ENCODE measurements at regions of chr7 and their contacts with region 1.

Region 1: DNA sequence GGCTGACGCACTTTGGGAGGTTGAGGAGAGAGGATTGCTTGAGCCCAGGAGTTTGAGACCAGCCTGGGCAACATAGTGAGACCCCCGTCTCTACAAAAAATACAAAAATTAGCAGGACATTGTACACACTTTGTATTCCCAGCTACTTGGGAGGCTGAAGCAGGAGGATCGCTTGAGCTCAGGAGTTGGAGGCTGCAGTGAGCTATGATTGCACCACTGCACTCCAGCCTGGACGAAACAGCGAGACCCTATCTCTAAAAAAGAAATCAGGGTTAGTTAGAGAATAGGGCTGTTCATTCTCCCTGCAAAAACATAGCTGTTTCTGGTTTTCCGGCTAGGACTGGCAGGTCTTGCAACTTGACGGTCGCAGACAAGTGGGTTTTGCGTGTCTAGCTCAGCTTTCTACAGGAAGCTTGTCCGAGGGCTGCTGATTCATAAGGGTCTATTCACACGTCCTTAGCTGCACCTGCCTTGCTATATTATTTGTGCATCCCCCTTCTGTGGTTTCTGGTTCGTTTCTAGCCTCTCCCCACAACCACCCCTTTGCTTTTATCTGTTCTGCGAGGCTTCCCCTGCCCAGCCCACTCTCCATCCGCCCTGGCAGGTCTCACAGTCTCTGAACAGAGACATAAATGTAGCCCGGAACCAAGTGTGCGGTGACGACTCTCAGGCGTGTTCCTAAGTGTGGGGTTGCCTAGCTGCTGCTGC is 10.7 kb downstream of the AMZ1 start:
- DNase-seq: no peak
- H3K4me3 ChIP-seq: no peak overlapping the region
- H3K27ac ChIP-seq: no peak overlapping the region
- H3K4me1 ChIP-seq: no peaks in the 10 kb centered on the region; a peak in 2 of 7 replicates
- H3K27me3 ChIP-seq: no peaks in the 10 kb centered on the region
- CTCF ChIP-seq: no peak
- EP300 ChIP-seq: no peak
- POLR2A ChIP-seq: no peak
- RAD21 ChIP-seq: no peak

Region 2: DNA sequence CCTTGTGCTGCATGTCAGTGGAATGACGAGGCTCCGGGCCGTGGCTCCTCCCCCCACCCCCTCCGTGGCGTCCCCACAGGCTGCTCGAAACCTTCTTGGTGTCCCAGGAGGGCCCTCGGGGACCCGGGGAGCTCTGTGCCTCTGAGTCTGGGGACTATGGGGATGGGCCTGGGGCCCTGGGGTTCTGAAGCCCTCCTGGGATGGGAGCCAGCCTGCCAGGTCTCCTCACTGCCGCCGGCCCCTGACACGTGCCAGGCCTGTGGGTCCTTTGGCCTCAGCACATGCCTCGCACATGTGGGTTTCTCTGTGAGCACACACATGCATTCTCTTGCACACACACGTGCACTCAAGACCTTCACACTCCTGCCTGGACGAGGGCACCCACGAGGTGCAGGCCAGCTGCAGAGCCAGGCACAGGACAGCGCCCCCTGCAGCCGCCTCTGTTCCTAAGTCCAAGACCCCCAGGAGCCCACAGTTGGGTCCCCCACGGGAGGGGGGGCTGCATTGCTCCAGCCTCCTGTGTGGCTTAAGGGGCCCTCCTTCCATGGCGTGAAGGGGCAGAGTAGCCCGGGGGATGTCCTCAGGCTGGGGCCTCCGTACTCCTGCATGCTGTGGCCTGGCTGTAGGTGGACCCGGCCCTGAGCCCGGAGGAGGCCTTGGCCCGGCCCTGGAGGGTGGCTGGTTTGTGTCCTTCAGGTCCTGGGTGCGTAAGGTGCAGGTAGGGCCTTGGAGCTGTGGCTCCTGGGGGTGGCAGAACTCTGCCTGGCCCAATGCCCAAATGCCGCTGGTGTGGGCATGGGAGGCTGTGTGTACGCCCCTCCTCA is 37.9 kb before region 1 on chr7:
- CTCF ChIA-PET with region 1: interaction called, 10 read pairs
- POLR2A ChIA-PET with region 1: interaction called, 4 read pairs
- DNase-seq: peak in 1 of 2 experiments; percentile 71
- H3K4me3 ChIP-seq: no peak overlapping the region
- H3K27ac ChIP-seq: no peak overlapping the region
- H3K4me1 ChIP-seq: peaks cover 0 to 4% (median under 1%) of the 10 kb centered on the region in 4 experiments; a peak in 2 of 7 replicates
- H3K27me3 ChIP-seq: no peaks in the 10 kb centered on the region; a peak in 2 of 7 replicates
- CTCF ChIP-seq: peak in 2 of 3 experiments; percentile 50 to 60; a peak in 3 of 4 replicates
- EP300 ChIP-seq: no peak
- POLR2A ChIP-seq: no peak
- RAD21 ChIP-seq: peak; percentile 34 to 48; a peak in 3 of 4 replicates

Region 3: DNA sequence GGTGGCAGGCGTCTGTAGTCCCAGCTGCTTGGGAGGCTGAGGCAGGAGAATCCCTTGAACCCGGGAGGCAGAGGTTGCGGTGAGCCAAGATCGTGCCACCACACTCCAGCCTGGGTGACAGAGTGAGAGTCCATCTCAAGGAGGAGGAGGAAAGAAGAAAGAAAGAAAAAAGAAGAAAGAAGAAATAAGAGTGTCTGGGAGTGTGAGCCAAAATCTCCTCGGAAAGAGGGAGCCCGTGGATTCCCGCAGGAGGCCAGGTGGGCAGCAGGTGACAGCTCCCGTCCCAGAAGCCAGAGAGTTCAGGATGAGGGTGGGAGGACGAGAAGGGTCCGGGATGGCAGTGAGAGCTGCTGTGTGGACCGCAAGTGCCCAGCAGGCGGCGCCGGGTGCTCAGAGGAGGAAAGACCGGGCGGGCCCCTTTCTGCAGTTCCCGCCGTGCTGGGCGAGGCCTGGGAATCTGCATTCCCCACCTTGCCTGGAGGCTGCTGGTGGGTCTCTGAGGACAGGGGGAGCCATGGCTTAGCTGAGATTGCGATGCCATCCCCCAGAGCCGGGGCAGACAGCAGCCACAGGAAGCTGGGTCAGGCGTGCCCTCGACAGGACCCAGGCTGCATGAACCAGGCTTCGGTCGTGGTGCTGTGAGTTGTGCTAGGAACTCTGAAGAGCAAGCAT is 27.9 kb before region 1 on chr7:
- CTCF ChIA-PET with region 1: interaction called, 24 read pairs
- POLR2A ChIA-PET with region 1: interaction called, 4 read pairs
- DNase-seq: peak in 1 of 2 experiments; percentile 94
- H3K4me3 ChIP-seq: no peak overlapping the region
- H3K27ac ChIP-seq: no peak overlapping the region
- H3K4me1 ChIP-seq: no peaks in the 10 kb centered on the region
- H3K27me3 ChIP-seq: peaks cover 0 to 7% (median 0%) of the 10 kb centered on the region in 4 experiments; a peak in 2 of 7 replicates
- CTCF ChIP-seq: peak in 2 of 3 experiments; percentile 90 to 94; a peak in 3 of 4 replicates
- EP300 ChIP-seq: no peak
- POLR2A ChIP-seq: no peak
- RAD21 ChIP-seq: peak; percentile 87 to 88

Region 4: GRCh38 chr7:2680792-2681490 is 17.8 kb before region 1 on chr7:
- CTCF ChIA-PET with region 1: interaction called, 39 read pairs
- POLR2A ChIA-PET with region 1: interaction called, 5 read pairs
- DNase-seq: peak; percentile 46 to 95
- H3K4me3 ChIP-seq: no peak overlapping the region
- H3K27ac ChIP-seq: no peak overlapping the region
- H3K4me1 ChIP-seq: no peaks in the 10 kb centered on the region
- H3K27me3 ChIP-seq: no peaks in the 10 kb centered on the region; a peak in 1 of 7 replicates
- CTCF ChIP-seq: peak; percentile 85 to 89 (median 86)
- EP300 ChIP-seq: no peak
- POLR2A ChIP-seq: no peak
- RAD21 ChIP-seq: peak; percentile 84 to 88

Region 5: GRCh38 chr7:2688409-2689331 is 10.1 kb before region 1 on chr7:
- CTCF ChIA-PET with region 1: interaction called, 17 read pairs
- POLR2A ChIA-PET with region 1: interaction called, 4 read pairs
- DNase-seq: peak in 1 of 2 experiments; percentile 66
- H3K4me3 ChIP-seq: peak overlapping the region; percentile 25 to 63 (median 46)
- H3K27ac ChIP-seq: no peak overlapping the region
- H3K4me1 ChIP-seq: peaks cover 0 to 11% (median 8%) of the 10 kb centered on the region in 4 experiments; a peak in 5 of 7 replicates
- H3K27me3 ChIP-seq: peaks cover 7 to 34% (median 30%) of the 10 kb centered on the region in 4 experiments
- CTCF ChIP-seq: no peak
- EP300 ChIP-seq: no peak
- POLR2A ChIP-seq: no peak
- RAD21 ChIP-seq: no peak

Region 6: GRCh38 chr7:2715341-2716231 is 16.9 kb after region 1 on chr7:
- CTCF ChIA-PET with region 1: interaction called, 125 read pairs
- POLR2A ChIA-PET with region 1: interaction called, 5 read pairs
- DNase-seq: no peak
- H3K4me3 ChIP-seq: no peak overlapping the region
- H3K27ac ChIP-seq: no peak overlapping the region
- H3K4me1 ChIP-seq: no peaks in the 10 kb centered on the region; a peak in 3 of 7 replicates
- H3K27me3 ChIP-seq: no peaks in the 10 kb centered on the region
- CTCF ChIP-seq: no peak
- EP300 ChIP-seq: no peak
- POLR2A ChIP-seq: no peak
- RAD21 ChIP-seq: no peak

Region 7: GRCh38 chr7:2720582-2721491 is 22.1 kb after region 1 on chr7:
- CTCF ChIA-PET with region 1: interaction called, 125 read pairs
- POLR2A ChIA-PET with region 1: interaction called, 4 read pairs
- DNase-seq: no peak
- H3K4me3 ChIP-seq: no peak overlapping the region
- H3K27ac ChIP-seq: no peak overlapping the region
- H3K4me1 ChIP-seq: no peaks in the 10 kb centered on the region; a peak in 4 of 7 replicates
- H3K27me3 ChIP-seq: no peaks in the 10 kb centered on the region
- CTCF ChIP-seq: peak in 2 of 3 experiments; percentile 6 to 14; a peak in 2 of 4 replicates
- EP300 ChIP-seq: no peak
- POLR2A ChIP-seq: no peak
- RAD21 ChIP-seq: peak in 1 of 2 experiments; percentile 40; a peak in 2 of 4 replicates

Region 8: GRCh38 chr7:2757904-2758672 is 59.4 kb after region 1 on chr7:
- CTCF ChIA-PET with region 1: no interaction called
- POLR2A ChIA-PET with region 1: no interaction called
- DNase-seq: no peak
- H3K4me3 ChIP-seq: no peak overlapping the region
- H3K27ac ChIP-seq: 0 out of 2 replicates have a peak overlapping the region, but pooled peaks have one; percentile 31
- H3K4me1 ChIP-seq: peaks cover 0 to 11% (median 4%) of the 10 kb centered on the region in 4 experiments; a peak in 5 of 7 replicates
- H3K27me3 ChIP-seq: no peaks in the 10 kb centered on the region
- CTCF ChIP-seq: no peak
- EP300 ChIP-seq: no peak
- POLR2A ChIP-seq: no peak
- RAD21 ChIP-seq: no peak

Measured in H1 (cell line).